ENCODE measurements at regions of chr12 and their contacts with region 1.

Region 1: DNA sequence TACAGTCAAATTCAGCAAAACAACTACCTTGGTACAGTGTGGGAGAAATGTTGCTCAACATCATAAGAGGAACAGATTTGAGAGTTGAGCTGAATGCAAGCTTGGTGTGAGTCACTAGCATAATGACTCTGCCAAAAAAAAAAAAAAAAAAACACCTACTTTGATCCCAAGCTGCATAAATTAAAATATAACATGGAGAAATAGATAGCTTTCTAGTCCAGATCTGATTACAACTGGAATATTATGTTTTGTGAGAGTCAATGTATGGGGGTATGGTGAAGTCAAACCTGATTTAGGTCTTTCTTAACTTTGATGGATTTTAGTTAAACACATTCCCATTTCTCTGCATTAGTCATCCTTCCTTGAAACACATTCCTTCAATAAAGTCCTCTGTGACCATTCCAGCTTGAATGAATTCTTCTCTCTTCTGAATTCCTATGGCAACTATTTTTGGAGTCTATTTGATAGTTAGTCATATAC is 188.1 kb downstream of the SLC5A8 start:
- DNase-seq: no peak
- ATAC-seq: peak; percentile 75
- H3K4me3 ChIP-seq: no peak overlapping the region
- H3K27ac ChIP-seq: no peak overlapping the region
- H3K4me1 ChIP-seq: no peaks in the 10 kb centered on the region
- H3K27me3 ChIP-seq: no peaks in the 10 kb centered on the region

Region 2: DNA sequence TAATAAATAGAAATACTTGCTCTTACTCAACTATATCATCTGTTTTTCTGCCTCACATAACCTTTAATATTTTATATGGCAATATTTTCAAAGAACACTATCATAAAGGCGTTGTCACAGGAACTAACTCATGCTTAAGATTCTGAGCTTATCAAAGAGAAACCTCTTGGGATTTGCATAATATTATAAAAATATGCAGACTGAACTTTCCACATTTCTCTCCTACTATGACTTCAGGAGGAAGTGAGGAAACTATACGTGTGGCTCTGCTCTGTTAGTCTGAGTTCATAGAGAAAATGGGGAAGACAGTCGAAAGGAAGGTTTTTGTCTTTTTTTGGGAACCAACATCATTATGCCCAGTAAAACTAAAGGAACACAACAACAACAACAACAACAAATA is 1249.7 kb before region 1 on chr12:
- intact Hi-C with region 1: no loop called
- DNase-seq: no peak
- ATAC-seq: no peak
- H3K4me3 ChIP-seq: no peak overlapping the region
- H3K27ac ChIP-seq: peak overlapping the region in 1 of 2 donors; percentile 67
- H3K4me1 ChIP-seq: no peaks in the 10 kb centered on the region
- H3K27me3 ChIP-seq: no peaks in the 10 kb centered on the region

Region 3: DNA sequence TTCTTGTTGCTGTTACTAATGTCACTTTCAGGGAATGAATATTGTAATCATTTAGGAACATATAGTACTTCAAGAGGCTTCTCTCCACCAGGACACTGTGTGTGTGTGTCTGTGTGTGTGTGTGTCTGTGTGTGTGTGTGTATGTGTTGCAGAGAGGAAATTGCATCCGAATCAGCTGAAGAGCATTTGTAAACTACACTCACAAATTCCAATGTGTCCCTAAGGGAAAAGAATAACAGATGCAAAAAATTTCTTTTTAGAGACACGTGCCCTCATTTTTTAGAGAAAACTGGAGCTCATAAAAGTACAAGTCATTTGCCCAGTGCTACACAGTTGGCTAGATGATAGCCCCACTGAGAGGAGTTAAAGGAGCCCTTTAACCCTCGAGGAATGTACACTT is 58.6 kb before region 1 on chr12:
- intact Hi-C with region 1: loop called in 1 of 2 experiments (anchors 5 kb)
- DNase-seq: no peak
- ATAC-seq: no peak
- H3K4me3 ChIP-seq: no peak overlapping the region
- H3K27ac ChIP-seq: no peak overlapping the region
- H3K4me1 ChIP-seq: no peaks in the 10 kb centered on the region
- H3K27me3 ChIP-seq: no peaks in the 10 kb centered on the region

Region 4: DNA sequence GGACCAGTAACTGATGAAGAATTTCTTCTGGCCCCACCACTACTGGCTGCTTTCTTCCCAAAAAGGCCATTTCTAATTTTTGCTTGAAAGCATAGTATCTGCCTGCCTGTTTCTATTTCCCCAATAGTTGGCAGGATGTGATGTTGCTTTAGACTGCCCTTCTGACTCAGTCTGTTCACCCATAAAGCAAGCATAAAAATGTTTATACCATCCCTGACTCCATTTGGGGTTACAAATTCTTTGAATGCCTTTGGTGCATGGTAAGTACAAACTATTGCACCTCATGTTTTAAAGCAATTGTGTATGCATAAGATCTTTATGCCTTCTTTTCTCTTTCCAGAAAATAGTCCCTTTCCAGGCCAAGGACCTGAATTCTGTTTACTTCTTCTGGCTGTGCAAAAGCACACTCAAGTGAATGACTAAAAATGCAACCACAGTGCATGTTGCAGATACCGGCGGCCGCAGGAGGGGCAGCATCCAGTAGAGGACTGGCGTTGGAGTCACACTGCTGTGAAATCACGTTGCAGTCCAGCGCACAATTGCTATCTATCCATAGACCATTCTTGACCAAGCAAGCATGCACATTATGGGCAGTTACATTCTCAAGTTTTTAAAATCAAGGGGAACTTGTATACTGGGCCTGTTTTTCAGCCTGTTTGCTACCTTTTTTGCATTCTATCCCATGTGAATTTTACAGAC is 105.7 kb after region 1 on chr12:
- intact Hi-C with region 1: loop called in 1 of 2 experiments (anchors 10 kb)
- DNase-seq: no peak
- ATAC-seq: no peak
- H3K4me3 ChIP-seq: no peak overlapping the region
- H3K27ac ChIP-seq: peak overlapping the region; percentile 7 to 58
- H3K4me1 ChIP-seq: no peaks in the 10 kb centered on the region
- H3K27me3 ChIP-seq: no peaks in the 10 kb centered on the region

Region 5: DNA sequence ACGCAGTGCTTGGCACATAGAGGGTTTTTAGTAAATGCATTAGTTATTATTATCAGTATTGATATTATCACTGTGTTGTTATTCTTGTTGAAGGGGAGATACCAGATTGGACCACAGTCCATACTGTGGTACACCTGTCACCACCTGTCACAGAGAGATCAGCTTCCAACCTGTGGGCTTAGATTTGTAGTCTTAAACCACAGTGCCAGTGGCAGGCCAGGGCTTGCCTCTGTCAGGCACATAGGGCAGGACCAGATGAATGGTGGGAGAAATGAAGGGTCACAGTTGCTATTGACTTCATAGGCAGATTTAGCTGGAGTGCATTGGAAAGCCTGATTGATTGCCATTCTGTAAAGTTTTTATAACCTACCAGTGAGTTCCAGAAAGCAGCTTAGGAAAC is 350.5 kb after region 1 on chr12:
- intact Hi-C with region 1: no loop called
- DNase-seq: no peak
- ATAC-seq: no peak
- H3K4me3 ChIP-seq: no peak overlapping the region
- H3K27ac ChIP-seq: no peak overlapping the region
- H3K4me1 ChIP-seq: no peaks in the 10 kb centered on the region
- H3K27me3 ChIP-seq: no peaks in the 10 kb centered on the region